ENCODE measurements at regions of chr4 and their contacts with region 1.

Region 1: DNA sequence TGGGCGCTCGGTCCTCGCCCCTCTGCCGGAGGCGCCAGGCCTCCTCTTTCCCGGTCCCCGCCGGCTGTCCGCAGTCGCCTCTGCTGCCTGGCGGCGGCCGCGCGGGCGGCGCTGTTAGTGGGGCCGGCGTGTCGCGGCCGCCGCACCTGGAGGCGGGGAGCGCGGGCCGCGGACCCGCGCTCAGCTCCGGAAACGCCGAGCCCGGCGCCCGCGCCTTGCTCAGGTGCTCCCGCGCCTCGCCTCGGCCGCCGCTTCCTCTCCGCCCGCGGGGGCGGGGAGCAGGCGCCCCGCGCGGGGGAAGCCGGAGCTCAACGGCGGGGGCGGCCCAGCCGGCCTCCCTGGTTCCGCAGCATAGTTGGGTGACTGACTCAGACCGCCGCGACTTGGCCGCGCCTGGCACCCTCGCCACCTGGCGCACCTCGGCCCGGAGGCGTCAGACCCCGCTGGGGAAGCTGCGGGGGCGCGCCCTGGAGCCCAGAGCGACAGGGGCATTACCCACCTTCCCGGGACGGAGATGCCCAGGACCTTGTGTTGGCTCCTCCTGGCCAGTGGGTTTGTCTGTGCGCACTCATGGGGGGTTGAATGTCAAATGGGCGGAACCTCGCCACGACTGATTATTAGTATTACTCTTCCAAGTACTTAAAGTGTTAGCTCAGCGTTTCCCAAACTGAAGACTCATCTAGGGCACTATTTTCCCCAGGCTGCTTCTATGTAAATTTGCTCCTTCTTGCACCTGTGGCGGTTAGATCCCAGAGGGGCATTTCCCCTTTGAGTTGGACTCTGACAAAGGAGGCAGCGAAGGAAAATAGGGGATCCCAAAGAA is at the start of gene ARAP2:
- DNase-seq: peak; percentile 42 to 67 (median 64)
- H3K4me3 ChIP-seq: peak within 1 kb of the TSS; percentile 78 to 98 (median 92)
- H3K4me3 Mint-ChIP-seq: peak within 1 kb of the TSS; percentile 96
- H3K27ac ChIP-seq: peak within 1 kb of the TSS; percentile 77 to 86
- H3K27ac Mint-ChIP-seq: peak within 1 kb of the TSS; percentile 79 to 94 (median 90)
- H3K4me1 ChIP-seq: peaks cover 22 to 32% of the 10 kb centered on the region in 2 donors
- H3K4me1 Mint-ChIP-seq: peaks cover 32% of the 10 kb centered on the region
- H3K27me3 ChIP-seq: no peaks in the 10 kb centered on the region
- H3K27me3 Mint-ChIP-seq: peaks cover 0 to 10% (median 4%) of the 10 kb centered on the region in 3 donors
- CTCF ChIP-seq: no peak
- polyA plus RNA-seq, gene ARAP2: 4.6 to 17.7 (median 5.6) TPM

Region 2: DNA sequence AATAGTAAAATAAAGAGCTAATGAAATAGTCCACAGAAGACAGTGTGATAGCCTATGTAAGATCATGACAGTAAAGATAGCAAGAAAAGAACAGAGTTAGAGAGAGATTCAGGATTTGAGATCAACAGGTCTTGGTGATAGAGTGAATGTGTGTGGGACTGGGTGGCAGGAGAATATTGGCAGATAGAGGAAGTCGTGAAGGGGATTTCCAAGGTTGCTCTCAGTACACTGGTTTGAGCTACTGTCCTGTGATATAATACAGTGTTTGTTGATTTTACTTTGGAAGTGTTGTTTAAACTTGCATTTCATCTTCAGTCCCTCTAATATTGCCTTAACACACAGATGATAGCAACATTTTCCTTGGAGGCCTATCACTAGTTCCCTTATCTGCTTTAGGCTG is 81.0 kb after region 1 on chr4:
- intact Hi-C with region 1: loop called (anchors 5 to 10 kb)
- DNase-seq: peak; percentile 80 to 92 (median 92)
- H3K4me3 ChIP-seq: peak overlapping the region in 1 of 3 experiments; percentile 42
- H3K4me3 Mint-ChIP-seq: peak overlapping the region in 1 of 2 donors; percentile 47
- H3K27ac ChIP-seq: peak overlapping the region; percentile 48 to 88
- H3K27ac Mint-ChIP-seq: peak overlapping the region; percentile 86 to 95 (median 92)
- H3K4me1 ChIP-seq: peaks cover 77 to 85% of the 10 kb centered on the region in 2 donors
- H3K4me1 Mint-ChIP-seq: peaks cover 79% of the 10 kb centered on the region
- H3K27me3 ChIP-seq: no peaks in the 10 kb centered on the region
- H3K27me3 Mint-ChIP-seq: peaks cover 0 to 2% (median 1%) of the 10 kb centered on the region in 3 donors
- CTCF ChIP-seq: no peak

Region 3: GRCh38 chr4:36337665-36338185 is 93.3 kb after region 1 on chr4:
- intact Hi-C with region 1: no loop called
- DNase-seq: peak in 2 of 3 donors; percentile 12 to 36
- H3K4me3 ChIP-seq: no peak overlapping the region
- H3K4me3 Mint-ChIP-seq: no peak overlapping the region
- H3K27ac ChIP-seq: peak overlapping the region in 1 of 2 donors; percentile 47
- H3K27ac Mint-ChIP-seq: peak overlapping the region in 4 of 7 donors; percentile 1 to 53 (median 40)
- H3K4me1 ChIP-seq: peaks cover 20 to 21% of the 10 kb centered on the region in 2 donors
- H3K4me1 Mint-ChIP-seq: peaks cover 27% of the 10 kb centered on the region
- H3K27me3 ChIP-seq: no peaks in the 10 kb centered on the region
- H3K27me3 Mint-ChIP-seq: peaks cover 0 to 3% (median 0%) of the 10 kb centered on the region in 3 donors
- CTCF ChIP-seq: no peak